Activated CD4-positive, alpha-beta memory T cell treated with anti-CD3 and anti-CD28 coated beads, Interleukin-2, amount 10 ng/mL, durations not matched to agents 7 days and 5 days (primary cell): ENCODE measurements at regions of chr10 and their contacts with region 1.

Region 1: GRCh38 chr10:13586676-13587355 is at the start of gene PRPF18:
- DNase-seq: peak; percentile 95
- H3K4me3 Mint-ChIP-seq: peak within 1 kb of the TSS; percentile 100
- H3K27ac Mint-ChIP-seq: peak within 1 kb of the TSS; percentile 91
- H3K4me1 Mint-ChIP-seq: peaks cover 29% of the 10 kb centered on the region
- H3K27me3 Mint-ChIP-seq: peaks cover 17% of the 10 kb centered on the region
- total RNA-seq, gene PRPF18: 22.5 to 26.0 TPM

Region 2: DNA sequence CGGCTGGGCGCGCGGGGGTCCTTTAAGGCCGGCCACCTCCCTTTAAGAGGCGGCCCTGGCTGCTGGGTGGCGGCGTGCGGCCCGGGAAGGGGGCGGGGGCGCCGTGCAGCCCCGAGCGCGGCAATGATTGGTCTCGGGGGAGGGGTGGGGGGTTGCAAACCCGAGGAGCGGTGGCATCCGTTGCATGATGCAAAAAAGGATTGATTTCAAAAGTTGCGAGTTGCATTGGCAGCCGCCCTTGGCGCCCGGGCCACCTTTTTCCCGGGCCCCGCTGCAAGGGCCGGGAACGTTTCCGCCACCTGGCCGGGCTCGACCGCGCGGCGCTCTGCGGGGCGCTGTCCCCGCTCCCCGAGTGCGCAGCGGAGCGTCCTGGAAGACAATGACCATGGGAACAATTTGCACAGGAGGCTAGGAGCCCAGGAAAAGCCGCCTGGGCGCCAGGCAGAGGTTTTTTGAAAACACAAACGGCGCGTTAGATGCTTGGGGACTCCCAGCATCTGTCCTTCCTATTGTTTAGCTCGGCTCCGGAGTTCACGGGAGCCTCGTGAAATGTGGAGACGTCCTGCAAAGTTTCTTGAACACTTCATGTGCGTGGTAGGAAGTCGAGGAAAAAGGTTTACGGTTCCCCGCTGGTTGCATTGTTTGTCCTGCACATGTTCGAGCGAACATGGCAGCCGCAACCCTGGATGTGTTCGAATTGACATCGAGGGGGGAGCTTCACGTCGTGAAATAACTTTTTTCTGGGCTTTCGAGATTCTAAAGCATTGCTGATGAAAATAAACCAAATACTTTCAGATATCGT is 238.4 kb before region 1 on chr10 and contains the start of gene SEPHS1:
- CTCF ChIA-PET with region 1: interaction called, 12 read pairs
- POLR2A ChIA-PET with region 1: interaction called, 3 read pairs
- DNase-seq: peak; percentile 86
- H3K4me3 Mint-ChIP-seq: peak within 1 kb of the TSS; percentile 91
- H3K27ac Mint-ChIP-seq: peak within 1 kb of the TSS; percentile 95
- H3K4me1 Mint-ChIP-seq: peaks cover 64% of the 10 kb centered on the region
- H3K27me3 Mint-ChIP-seq: peaks cover 10% of the 10 kb centered on the region
- total RNA-seq, gene SEPHS1: 50.9 to 53.6 TPM